BJ (cell line): ENCODE measurements at regions of chr17 and their contacts with region 1.

Region 1: GRCh38 chr17:42322382-42323267 is 34.3 kb downstream of the STAT5A start:
- DNase-seq: peak; percentile 56
- H3K4me3 ChIP-seq: no peak overlapping the region
- H3K27me3 ChIP-seq: no peaks in the 10 kb centered on the region
- CTCF ChIP-seq: peak; percentile 99

Region 2: GRCh38 chr17:42312285-42313130 is 10.1 kb before region 1 on chr17:
- CTCF ChIA-PET with region 1: interaction called, 18 read pairs
- POLR2A ChIA-PET with region 1: no interaction called
- DNase-seq: no peak
- H3K4me3 ChIP-seq: no peak overlapping the region
- H3K27me3 ChIP-seq: no peaks in the 10 kb centered on the region
- CTCF ChIP-seq: peak; percentile 77

Region 3: GRCh38 chr17:42347198-42347597 is 24.6 kb after region 1 on chr17:
- CTCF ChIA-PET with region 1: no interaction called
- POLR2A ChIA-PET with region 1: no interaction called
- DNase-seq: peak; percentile 79
- H3K4me3 ChIP-seq: no peak overlapping the region
- H3K27me3 ChIP-seq: no peaks in the 10 kb centered on the region
- CTCF ChIP-seq: no peak

Region 4: DNA sequence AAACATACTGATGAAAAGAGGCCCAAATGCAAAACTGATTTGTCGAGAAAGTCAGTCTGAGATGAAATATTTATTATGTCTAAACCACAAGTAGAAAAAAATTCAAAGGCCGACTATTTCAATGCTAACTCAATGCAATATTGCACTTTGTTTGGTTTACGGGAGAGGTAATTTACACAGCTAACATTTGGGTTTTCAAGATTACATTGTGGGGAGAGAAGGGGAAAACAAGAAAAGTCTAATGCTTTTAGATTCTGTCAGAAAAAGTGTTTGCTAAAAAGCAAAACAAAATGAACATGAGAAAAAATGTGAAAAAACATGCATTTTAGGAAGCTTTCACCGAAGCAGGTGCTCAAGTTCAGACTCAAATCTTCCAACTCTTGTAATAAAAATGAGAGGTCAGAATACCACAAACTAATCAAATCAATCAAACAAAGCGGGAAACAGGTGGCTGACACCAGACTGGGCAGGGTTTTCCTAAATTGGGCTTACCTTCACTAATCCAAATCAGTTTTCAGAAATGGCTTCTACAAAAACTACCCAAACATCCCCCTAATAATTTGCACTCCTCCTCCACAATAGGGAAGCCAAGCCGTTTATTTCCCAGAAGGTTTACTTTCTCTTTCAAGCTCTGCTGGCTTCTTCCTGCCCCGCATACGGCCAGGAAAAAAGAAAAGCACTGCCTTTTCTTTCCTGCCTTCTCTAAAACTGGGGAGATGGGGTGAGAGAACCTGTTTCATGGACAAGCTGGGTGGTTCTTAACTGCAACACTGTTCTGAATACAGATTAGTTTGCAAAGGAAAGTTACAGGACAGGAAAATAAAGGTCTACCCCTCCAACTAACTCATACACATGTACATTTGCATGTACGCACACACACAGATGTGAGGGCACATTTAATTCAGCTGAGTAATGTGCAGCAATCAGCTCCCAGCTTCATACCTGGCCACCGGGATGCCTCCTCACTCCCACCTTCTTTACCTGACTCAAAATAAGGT is 56.3 kb after region 1 on chr17:
- CTCF ChIA-PET with region 1: no interaction called
- POLR2A ChIA-PET with region 1: no interaction called
- DNase-seq: no peak
- H3K4me3 ChIP-seq: peak overlapping the region; percentile 16; the same call in 1 of the 2 replicates
- H3K27me3 ChIP-seq: no peaks in the 10 kb centered on the region
- CTCF ChIP-seq: no peak

Region 5: GRCh38 chr17:42422958-42423712 is 100.5 kb after region 1 on chr17 and contains the start of gene CAVIN1:
- CTCF ChIA-PET with region 1: interaction called, 11 read pairs
- POLR2A ChIA-PET with region 1: interaction called, 4 read pairs
- DNase-seq: peak; percentile 91
- H3K4me3 ChIP-seq: peak within 1 kb of the TSS; percentile 64
- H3K27me3 ChIP-seq: no peaks in the 10 kb centered on the region
- CTCF ChIP-seq: no peak
- polyA plus RNA-seq, gene CAVIN1: 607 and 734 TPM in 2 replicates

Region 6: DNA sequence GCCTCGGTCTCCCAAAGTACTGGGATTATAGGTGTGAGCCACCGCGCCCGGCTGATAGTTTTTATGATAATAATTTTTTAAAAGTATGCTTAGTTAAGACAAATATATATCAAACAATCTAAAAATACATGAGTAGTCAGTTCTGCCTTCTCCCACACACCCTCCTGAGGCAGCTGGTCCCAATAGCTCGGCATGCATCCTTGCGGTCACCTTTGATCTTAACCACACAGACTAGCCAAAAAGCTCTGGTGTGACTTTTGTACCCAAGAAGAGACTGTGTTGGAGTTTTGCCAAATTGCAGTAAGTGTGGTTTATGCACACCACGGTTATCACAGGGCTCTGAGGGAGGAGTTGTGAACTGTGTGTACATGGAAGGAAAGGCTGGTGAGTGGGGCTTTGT is 161.7 kb after region 1 on chr17:
- CTCF ChIA-PET with region 1: no interaction called
- POLR2A ChIA-PET with region 1: no interaction called
- DNase-seq: no peak
- H3K4me3 ChIP-seq: no peak overlapping the region
- H3K27me3 ChIP-seq: no peaks in the 10 kb centered on the region
- CTCF ChIP-seq: no peak

Region 7: DNA sequence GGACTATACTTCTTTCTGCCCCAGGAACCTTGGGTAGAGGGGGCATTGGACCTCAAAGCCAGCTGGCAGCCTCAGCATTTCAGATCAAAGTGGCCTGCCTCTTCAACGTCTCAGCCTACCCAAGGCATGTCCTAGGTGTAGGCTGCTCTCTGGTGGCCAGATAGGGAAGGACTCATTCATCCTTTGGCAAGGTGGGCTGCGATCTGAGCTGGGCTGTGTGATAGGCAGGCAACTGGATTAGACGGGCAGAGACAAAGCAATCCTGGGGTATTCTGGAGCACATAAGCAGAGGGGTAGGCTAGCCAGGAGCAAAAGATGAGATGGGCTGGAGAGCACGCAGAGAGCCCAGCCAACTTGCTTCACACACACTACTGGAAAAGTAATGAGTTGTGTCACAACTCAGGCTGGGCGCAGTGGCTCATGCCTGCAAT is 204.7 kb after region 1 on chr17:
- CTCF ChIA-PET with region 1: interaction called, 49 read pairs
- POLR2A ChIA-PET with region 1: no interaction called
- DNase-seq: no peak
- H3K4me3 ChIP-seq: no peak overlapping the region
- H3K27me3 ChIP-seq: no peaks in the 10 kb centered on the region
- CTCF ChIP-seq: peak; percentile 88